A549 (cell line): ENCODE measurements at regions of chr15 and their contacts with region 1.

Region 1: DNA sequence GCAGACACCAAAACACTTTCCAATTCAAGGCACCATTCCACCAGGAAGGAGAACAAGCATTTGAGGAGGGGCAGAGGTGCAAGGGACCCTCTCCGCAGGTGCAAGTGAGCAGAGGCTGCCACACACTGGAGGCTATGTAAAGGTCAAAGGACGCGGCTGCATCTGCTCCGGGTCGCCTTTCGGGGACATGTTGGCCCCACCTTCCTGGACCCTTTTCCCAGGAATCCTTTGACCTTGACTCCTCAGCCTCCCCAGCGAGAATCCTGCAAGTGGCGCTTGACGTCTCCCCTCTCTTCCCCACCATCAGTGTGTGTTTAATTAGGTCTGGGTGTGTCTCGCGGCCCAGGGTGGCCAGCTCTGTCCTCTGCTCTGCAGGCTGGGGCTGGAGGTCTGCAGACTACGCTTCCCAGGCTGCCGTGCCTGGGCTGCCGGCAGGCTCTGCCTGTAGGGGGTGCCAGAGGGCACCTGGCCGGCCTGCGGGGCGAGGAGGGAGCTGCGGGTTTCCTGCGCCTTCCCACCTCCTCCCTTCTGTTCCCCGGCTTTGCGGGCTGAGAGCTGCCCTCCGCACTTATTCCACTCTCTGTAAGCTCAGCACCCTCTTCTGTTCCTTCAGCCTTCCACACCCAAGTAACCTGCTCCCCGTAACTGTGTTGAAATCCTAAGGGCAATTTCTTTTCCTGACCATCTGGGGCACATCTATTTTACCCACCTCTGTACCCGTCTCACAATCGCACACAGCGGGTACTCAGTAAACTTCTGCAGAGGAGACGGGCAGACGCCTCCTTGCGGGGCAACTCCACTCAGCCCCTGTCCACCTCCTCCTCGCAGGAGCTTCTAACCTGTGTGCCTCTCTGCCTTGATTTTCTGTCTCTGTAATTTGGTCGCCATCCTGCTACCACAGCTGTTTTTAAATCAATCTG is 129.8 kb downstream of the NSMCE3 start:
- DNase-seq: peak; percentile 44 to 86
- ATAC-seq: peak; percentile 89 to 97
- H3K4me3 ChIP-seq: no peak overlapping the region
- H3K27ac ChIP-seq: no peak overlapping the region
- H3K4me1 ChIP-seq: peaks cover 4% of the 10 kb centered on the region; the same call in 1 of the 3 replicates
- CTCF ChIP-seq: peak; percentile 84
- EP300 ChIP-seq: no peak
- POLR2A ChIP-seq: no peak
- RAD21 ChIP-seq: peak; percentile 67 to 68

Region 2: GRCh38 chr15:28921919-28922706 is 217.7 kb before region 1 on chr15:
- CTCF ChIA-PET with region 1: no interaction called
- POLR2A ChIA-PET with region 1: no interaction called
- DNase-seq: no peak
- ATAC-seq: peak in 1 of 2 experiments; percentile 36; a peak in 2 of 6 replicates
- H3K4me3 ChIP-seq: no peak overlapping the region
- H3K27ac ChIP-seq: no peak overlapping the region
- H3K4me1 ChIP-seq: peaks cover 9% of the 10 kb centered on the region
- CTCF ChIP-seq: no peak
- EP300 ChIP-seq: no peak
- POLR2A ChIP-seq: no peak
- RAD21 ChIP-seq: peak in 1 of 2 experiments; percentile 33; a peak in 2 of 5 replicates

Region 3: GRCh38 chr15:29003191-29003839 is 136.5 kb before region 1 on chr15:
- CTCF ChIA-PET with region 1: no interaction called
- POLR2A ChIA-PET with region 1: no interaction called
- DNase-seq: no peak
- ATAC-seq: no peak
- H3K4me3 ChIP-seq: no peak overlapping the region
- H3K27ac ChIP-seq: no peak overlapping the region
- H3K4me1 ChIP-seq: no peaks in the 10 kb centered on the region
- CTCF ChIP-seq: no peak
- EP300 ChIP-seq: no peak
- POLR2A ChIP-seq: no peak
- RAD21 ChIP-seq: no peak

Region 4: GRCh38 chr15:29124581-29125381 is 15.0 kb before region 1 on chr15:
- CTCF ChIA-PET with region 1: interaction called, 33 read pairs
- POLR2A ChIA-PET with region 1: no interaction called
- DNase-seq: no peak
- ATAC-seq: peak in 1 of 2 experiments; percentile 48; a peak in 3 of 6 replicates
- H3K4me3 ChIP-seq: no peak overlapping the region
- H3K27ac ChIP-seq: no peak overlapping the region
- H3K4me1 ChIP-seq: no peaks in the 10 kb centered on the region
- CTCF ChIP-seq: no peak
- EP300 ChIP-seq: no peak
- POLR2A ChIP-seq: no peak
- RAD21 ChIP-seq: peak in 1 of 2 experiments; percentile 13; a peak in 1 of 5 replicates

Region 5: DNA sequence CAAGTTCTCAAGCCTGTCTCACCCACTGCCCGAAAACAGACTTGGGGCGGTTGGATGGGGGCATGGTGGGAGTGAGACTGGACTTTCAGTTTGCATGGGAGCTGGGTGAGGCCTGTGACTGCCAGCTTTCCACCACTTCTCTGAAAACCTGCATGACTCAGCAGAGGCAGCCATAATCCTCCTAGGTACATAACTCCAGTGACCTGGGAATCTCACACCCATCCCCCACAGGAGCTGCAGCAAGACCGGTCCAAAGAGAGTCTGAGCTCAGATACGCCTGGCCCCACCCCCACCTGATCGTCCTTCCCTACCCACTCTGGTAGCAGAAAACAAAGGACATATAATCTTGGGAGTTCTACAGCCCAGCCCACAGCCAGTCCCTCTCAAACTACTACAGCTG is 22.6 kb after region 1 on chr15:
- CTCF ChIA-PET with region 1: interaction called, 27 read pairs
- POLR2A ChIA-PET with region 1: no interaction called
- DNase-seq: no peak
- ATAC-seq: no peak
- H3K4me3 ChIP-seq: no peak overlapping the region
- H3K27ac ChIP-seq: no peak overlapping the region
- H3K4me1 ChIP-seq: no peaks in the 10 kb centered on the region
- CTCF ChIP-seq: no peak
- EP300 ChIP-seq: no peak
- POLR2A ChIP-seq: no peak
- RAD21 ChIP-seq: no peak

Region 6: DNA sequence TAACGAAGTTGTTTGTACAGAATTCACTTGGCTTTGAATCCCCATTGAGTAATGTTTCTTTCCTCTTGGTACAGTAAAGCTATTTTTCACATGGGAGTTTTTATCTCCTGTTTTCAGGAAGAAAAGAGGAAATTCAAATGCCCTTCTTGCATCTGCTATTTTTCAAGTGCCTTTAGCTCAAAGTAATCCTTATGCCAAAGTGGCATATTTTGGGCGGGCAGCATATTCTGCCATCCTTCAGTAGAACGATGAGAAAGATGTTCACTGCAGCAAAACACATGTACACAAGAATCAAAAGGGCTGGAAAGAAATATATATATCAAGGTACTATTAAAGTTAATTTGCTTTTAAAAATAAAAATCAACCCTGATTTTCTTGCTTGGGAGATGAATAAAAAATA is 135.1 kb after region 1 on chr15:
- CTCF ChIA-PET with region 1: no interaction called
- POLR2A ChIA-PET with region 1: no interaction called
- DNase-seq: no peak
- ATAC-seq: no peak
- H3K4me3 ChIP-seq: no peak overlapping the region
- H3K27ac ChIP-seq: no peak overlapping the region
- H3K4me1 ChIP-seq: peaks cover 6% of the 10 kb centered on the region; the same call in 2 of the 3 replicates
- CTCF ChIP-seq: no peak
- EP300 ChIP-seq: no peak
- POLR2A ChIP-seq: no peak
- RAD21 ChIP-seq: no peak